Sigmoid colon (tissue), 7 donors: ENCODE measurements at regions of chr1 and their contacts with region 1.

Region 1: GRCh38 chr1:179809506-179810366 is 66.6 kb downstream of the FAM163A start:
- DNase-seq: peak; percentile 81
- H3K4me3 ChIP-seq: no peak overlapping the region
- H3K27ac ChIP-seq: no peak overlapping the region
- H3K4me1 ChIP-seq: peaks cover 0 to 12% (median 8%) of the 10 kb centered on the region in 4 donors
- H3K27me3 ChIP-seq: no peaks in the 10 kb centered on the region
- CTCF ChIP-seq: peak; percentile 78 to 95 (median 83)
- EP300 ChIP-seq: no peak
- POLR2A ChIP-seq: no peak

Region 2: DNA sequence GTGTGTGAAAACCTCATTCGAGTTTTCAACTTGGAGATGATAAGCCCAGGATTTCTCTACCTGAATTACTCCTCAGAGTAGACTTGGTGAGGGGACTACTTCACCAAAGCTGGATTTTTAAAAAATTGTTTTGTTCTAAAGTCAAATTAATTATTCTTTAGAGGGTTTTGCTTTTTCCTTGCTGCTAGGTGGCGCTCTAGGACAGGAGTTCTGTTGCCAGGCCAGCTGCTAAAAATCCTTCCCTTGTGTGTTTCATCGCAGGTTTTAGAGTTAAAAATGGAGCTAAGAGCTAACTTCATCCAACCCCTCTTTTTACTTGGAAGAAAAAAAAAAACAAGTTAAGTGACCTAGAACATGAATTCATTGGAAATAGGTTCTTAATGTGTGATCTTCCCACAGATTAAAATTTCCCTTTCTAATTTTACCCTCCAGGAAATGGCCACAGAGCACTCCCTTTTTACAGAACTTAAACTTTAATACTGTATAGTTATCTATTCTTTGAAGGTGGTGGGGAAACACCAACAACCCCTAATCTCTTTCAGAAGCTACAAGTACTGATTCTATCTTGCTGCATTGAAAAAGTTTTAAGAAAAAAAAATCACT is 103.3 kb before region 1 on chr1:
- intact Hi-C with region 1: loop called (anchors 1 kb)
- DNase-seq: no peak
- H3K4me3 ChIP-seq: no peak overlapping the region
- H3K27ac ChIP-seq: no peak overlapping the region
- H3K4me1 ChIP-seq: peaks cover 0 to 18% (median 14%) of the 10 kb centered on the region in 4 donors
- H3K27me3 ChIP-seq: no peaks in the 10 kb centered on the region
- CTCF ChIP-seq: peak; percentile 58 to 78 (median 66)
- EP300 ChIP-seq: no peak
- POLR2A ChIP-seq: no peak

Region 3: DNA sequence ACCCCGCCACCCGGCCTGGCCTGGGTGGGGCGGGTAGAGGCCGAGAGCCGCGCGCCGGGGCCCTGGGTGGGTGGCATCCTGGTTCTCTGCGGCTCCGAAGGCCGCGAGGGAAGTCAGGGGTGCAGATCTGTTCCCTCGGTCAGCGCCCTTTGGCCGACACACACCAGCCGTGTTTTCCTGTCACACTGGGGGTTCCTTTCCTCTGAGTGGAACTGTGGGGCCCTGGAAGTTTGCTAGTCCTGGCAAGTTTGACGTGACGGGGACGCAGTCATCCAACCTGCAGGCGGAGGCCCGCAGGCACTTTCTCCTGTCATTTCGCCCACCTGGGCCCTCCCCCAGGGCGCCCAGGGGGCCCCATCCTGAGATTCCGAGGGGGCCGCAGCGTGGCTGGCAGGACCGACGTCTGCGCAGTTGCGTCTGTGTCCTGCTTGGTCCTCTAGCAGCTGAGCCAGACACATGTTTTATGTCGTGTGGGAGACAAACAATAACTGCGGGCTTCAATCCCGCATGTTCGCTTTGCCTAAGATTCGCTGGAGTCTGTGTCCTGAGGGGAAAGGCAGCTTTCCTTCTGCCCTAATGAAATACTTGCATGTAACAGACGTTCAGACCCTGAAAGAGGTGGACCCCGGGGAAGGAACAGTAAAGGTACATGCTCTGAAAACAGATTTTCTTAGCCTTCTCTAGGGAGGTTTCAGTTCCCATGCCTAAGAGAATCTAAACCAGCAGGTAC is 65.2 kb before region 1 on chr1:
- intact Hi-C with region 1: loop called (anchors 5 kb)
- DNase-seq: no peak
- H3K4me3 ChIP-seq: peak overlapping the region in 3 of 4 donors; percentile 43 to 58 (median 55)
- H3K27ac ChIP-seq: peak overlapping the region in 2 of 4 donors; percentile 38 to 41
- H3K4me1 ChIP-seq: peaks cover 0 to 20% (median 17%) of the 10 kb centered on the region in 4 donors
- H3K27me3 ChIP-seq: peaks cover 18 to 56% (median 34%) of the 10 kb centered on the region in 3 donors
- CTCF ChIP-seq: no peak
- EP300 ChIP-seq: no peak
- POLR2A ChIP-seq: no peak

Region 4: GRCh38 chr1:179848233-179848632 is 38.5 kb after region 1 on chr1:
- intact Hi-C with region 1: no loop called
- DNase-seq: no peak
- H3K4me3 ChIP-seq: no peak overlapping the region
- H3K27ac ChIP-seq: no peak overlapping the region
- H3K4me1 ChIP-seq: no peaks in the 10 kb centered on the region
- H3K27me3 ChIP-seq: no peaks in the 10 kb centered on the region
- CTCF ChIP-seq: no peak
- EP300 ChIP-seq: no peak
- POLR2A ChIP-seq: no peak